ENCODE measurements at regions of chr22 and their contacts with region 1.

Region 1: DNA sequence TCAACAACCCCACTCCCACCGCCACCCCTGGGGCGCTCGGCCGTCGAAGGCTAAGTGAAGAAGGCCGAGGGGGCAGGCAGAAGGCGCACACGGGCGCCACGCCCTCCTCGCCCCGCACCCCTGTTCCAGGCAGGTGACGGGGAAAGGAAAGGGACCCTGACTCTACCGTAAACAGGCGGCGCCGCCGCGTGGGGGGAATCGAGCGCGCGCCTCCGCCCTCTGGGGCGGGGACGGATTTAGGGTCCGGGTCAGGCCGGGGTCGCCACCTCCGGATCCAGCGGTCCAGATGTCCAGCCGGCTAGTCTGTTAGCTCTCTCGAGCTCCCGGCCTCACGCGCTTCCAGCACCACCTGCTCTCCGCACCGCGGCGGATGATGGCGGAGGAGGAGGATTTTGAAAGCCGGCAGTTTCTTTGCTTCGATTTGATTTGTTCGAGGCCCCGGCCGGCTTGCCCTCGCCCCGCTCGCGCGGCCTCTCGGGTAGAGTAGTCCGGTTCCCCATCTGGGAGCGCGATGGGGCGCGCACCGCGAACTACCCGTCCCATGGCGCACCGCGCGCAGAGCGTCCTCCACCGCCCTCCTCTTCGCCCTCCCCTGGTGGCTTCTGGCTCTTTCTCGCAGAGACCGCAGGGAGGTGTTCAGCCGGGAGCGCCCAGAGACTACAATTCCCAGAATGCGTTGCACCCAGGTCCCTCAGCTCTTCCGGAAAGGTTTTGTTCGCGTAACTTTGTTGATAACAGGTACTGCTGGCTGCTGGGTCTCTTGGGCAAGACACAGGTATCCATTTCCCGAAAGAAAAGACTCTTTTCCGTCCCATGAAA is at the start of gene RANGAP1:
- DNase-seq: peak; percentile 98 to 99 (median 99)
- H3K4me3 ChIP-seq: peak within 1 kb of the TSS; percentile 82 to 94
- H3K4me3 Mint-ChIP-seq: peak within 1 kb of the TSS; percentile 92 to 98 (median 96)
- H3K27ac ChIP-seq: peak within 1 kb of the TSS; percentile 99
- H3K27ac Mint-ChIP-seq: peak within 1 kb of the TSS; percentile 96 to 99 (median 99)
- H3K4me1 ChIP-seq: peaks cover 23% of the 10 kb centered on the region
- H3K4me1 Mint-ChIP-seq: peaks cover 16 to 50% (median 36%) of the 10 kb centered on the region in 4 donors
- H3K27me3 ChIP-seq: no peaks in the 10 kb centered on the region
- H3K27me3 Mint-ChIP-seq: no peaks in the 10 kb centered on the region
- total RNA-seq, gene RANGAP1: 69.1 to 74.7 TPM

Region 2: DNA sequence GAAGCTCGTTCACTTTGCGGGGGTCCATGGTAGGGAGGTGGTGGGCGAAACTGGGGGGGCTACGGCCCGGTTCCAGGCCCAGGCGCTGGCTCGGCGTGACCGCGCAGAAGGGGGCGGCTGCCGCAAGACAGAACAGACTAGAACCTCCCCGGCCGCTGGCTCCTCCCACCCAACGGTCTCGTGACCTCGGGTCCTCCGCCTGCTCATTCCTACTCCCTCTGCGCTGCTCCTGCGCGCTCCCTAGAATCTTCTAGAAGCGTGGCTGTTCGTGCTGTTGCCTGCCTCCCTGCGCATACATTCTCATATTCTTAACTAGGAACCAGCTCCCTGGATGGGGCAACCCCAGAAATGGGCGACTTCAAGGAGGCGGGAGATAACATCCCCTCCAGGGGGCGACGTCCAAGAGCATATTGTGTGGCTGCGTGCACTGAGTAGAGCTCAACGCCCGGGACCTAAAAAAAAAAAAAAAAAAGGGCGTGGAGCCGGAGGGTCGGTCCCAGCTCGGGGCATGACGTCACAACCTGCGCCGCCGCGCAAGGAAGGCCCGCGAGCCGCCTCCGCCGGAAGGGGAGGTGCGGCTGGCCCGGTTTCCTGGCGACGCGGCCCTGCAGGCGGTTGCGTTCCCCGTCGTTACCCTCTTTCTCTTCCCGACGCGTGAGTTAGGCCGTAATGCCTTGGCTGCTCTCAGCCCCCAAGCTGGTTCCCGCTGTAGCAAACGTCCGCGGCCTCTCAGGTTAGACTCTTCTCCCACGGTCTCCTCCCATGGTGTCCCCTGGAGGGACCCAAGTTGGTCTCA is 429.3 kb before region 1 on chr22 and contains the starts of genes ST13 and XPNPEP3:
- CTCF ChIA-PET with region 1: no interaction called
- POLR2A ChIA-PET with region 1: interaction called, 16 read pairs
- intact Hi-C with region 1: loop called (anchors 1 kb)
- DNase-seq: peak; percentile 97 to 98 (median 98)
- H3K4me3 ChIP-seq: peak within 1 kb of the TSS; percentile 72 to 100
- H3K4me3 Mint-ChIP-seq: peak within 1 kb of the TSS; percentile 96 to 99 (median 98)
- H3K27ac ChIP-seq: peak within 1 kb of the TSS; percentile 99
- H3K27ac Mint-ChIP-seq: peak within 1 kb of the TSS; percentile 98 to 100 (median 100)
- H3K4me1 ChIP-seq: peaks cover 53% of the 10 kb centered on the region
- H3K4me1 Mint-ChIP-seq: peaks cover 23 to 66% (median 45%) of the 10 kb centered on the region in 4 donors
- H3K27me3 ChIP-seq: no peaks in the 10 kb centered on the region
- H3K27me3 Mint-ChIP-seq: peaks cover 0 to 2% of the 10 kb centered on the region in 2 donors
- total RNA-seq, gene ST13: 161 to 168 TPM
- total RNA-seq, gene XPNPEP3: 18.6 to 20.0 TPM

Region 3: GRCh38 chr22:41091132-41092022 is 194.7 kb before region 1 on chr22:
- CTCF ChIA-PET with region 1: no interaction called
- POLR2A ChIA-PET with region 1: interaction called, 11 read pairs
- intact Hi-C with region 1: loop called (anchors 1 kb)
- DNase-seq: peak; percentile 98 to 99 (median 99)
- H3K4me3 ChIP-seq: peak overlapping the region; percentile 79 to 93
- H3K4me3 Mint-ChIP-seq: peak overlapping the region; percentile 93 to 100 (median 98)
- H3K27ac ChIP-seq: peak overlapping the region; percentile 99
- H3K27ac Mint-ChIP-seq: peak overlapping the region; percentile 97 to 100 (median 99)
- H3K4me1 ChIP-seq: peaks cover 27% of the 10 kb centered on the region
- H3K4me1 Mint-ChIP-seq: peaks cover 20 to 44% (median 27%) of the 10 kb centered on the region in 4 donors
- H3K27me3 ChIP-seq: no peaks in the 10 kb centered on the region
- H3K27me3 Mint-ChIP-seq: no peaks in the 10 kb centered on the region

Region 4: GRCh38 chr22:41204992-41205900 is 80.8 kb before region 1 on chr22 and contains the start of gene L3MBTL2:
- CTCF ChIA-PET with region 1: no interaction called
- POLR2A ChIA-PET with region 1: no interaction called
- intact Hi-C with region 1: loop called (anchors 2 kb)
- DNase-seq: peak; percentile 97 to 99 (median 98)
- H3K4me3 ChIP-seq: peak within 1 kb of the TSS; percentile 73 to 95
- H3K4me3 Mint-ChIP-seq: peak within 1 kb of the TSS; percentile 93 to 99 (median 96)
- H3K27ac ChIP-seq: peak within 1 kb of the TSS; percentile 85
- H3K27ac Mint-ChIP-seq: peak within 1 kb of the TSS; percentile 84 to 97 (median 93)
- H3K4me1 ChIP-seq: peaks cover 18% of the 10 kb centered on the region
- H3K4me1 Mint-ChIP-seq: peaks cover 15 to 40% (median 23%) of the 10 kb centered on the region in 4 donors
- H3K27me3 ChIP-seq: no peaks in the 10 kb centered on the region
- H3K27me3 Mint-ChIP-seq: peaks cover 3 to 6% of the 10 kb centered on the region in 2 donors
- total RNA-seq, gene L3MBTL2: 42.7 to 48.2 TPM

Region 5: GRCh38 chr22:41264408-41264941 is 21.6 kb before region 1 on chr22:
- CTCF ChIA-PET with region 1: no interaction called
- POLR2A ChIA-PET with region 1: interaction called, 15 read pairs
- intact Hi-C with region 1: no loop called
- DNase-seq: no peak
- H3K4me3 ChIP-seq: no peak overlapping the region
- H3K4me3 Mint-ChIP-seq: no peak overlapping the region
- H3K27ac ChIP-seq: no peak overlapping the region
- H3K27ac Mint-ChIP-seq: peak overlapping the region in 2 of 7 donors; percentile 27 to 75
- H3K4me1 ChIP-seq: no peaks in the 10 kb centered on the region
- H3K4me1 Mint-ChIP-seq: peaks cover 0 to 3% (median under 1%) of the 10 kb centered on the region in 4 donors
- H3K27me3 ChIP-seq: no peaks in the 10 kb centered on the region
- H3K27me3 Mint-ChIP-seq: no peaks in the 10 kb centered on the region

Region 6: DNA sequence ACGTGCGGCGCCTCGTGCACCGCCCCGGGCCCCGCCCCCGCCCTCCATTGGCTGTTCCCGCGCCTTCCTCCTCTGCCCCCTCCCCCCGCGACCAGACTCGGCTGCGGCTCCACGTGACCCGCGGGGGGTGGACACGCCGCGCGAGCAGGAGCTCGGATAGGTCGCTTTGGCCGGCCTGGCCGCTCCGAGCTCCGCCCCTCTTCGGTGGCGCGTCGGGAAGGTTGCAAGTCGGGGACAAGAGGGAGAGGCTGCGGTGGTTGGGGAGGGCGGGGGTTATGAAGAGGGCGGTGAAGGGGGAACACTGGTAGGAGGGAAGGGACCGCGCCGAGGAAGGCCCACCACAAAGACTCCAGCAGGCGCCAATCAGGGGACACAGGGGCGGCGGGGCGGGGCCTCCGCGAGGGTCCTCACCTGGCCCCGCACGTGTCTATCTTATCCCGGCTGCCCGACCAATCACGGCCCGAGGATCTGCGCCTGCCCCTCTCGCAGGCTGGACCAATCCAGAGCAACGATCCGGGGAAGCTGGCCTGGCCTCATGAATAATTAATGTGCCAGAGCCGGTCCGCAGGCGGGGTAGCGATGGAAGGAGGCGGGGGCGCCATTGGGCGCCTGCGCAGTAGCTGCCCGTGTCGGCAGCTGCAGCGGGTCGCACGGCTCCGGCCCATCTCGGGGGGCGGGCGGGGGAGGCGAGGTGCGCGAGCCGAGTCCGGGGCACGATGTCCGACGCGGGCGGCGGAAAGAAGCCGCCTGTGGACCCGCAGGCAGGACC is 95.5 kb after region 1 on chr22 and contains the start of gene TEF:
- CTCF ChIA-PET with region 1: interaction called, 4 read pairs
- POLR2A ChIA-PET with region 1: interaction called, 45 read pairs
- intact Hi-C with region 1: loop called (anchors 1 kb)
- DNase-seq: peak; percentile 99
- H3K4me3 ChIP-seq: peak within 1 kb of the TSS; percentile 65 to 88
- H3K4me3 Mint-ChIP-seq: peak within 1 kb of the TSS; percentile 90 to 97 (median 94)
- H3K27ac ChIP-seq: peak within 1 kb of the TSS; percentile 87
- H3K27ac Mint-ChIP-seq: peak within 1 kb of the TSS; percentile 98 to 99 (median 98)
- H3K4me1 ChIP-seq: peaks cover 18% of the 10 kb centered on the region
- H3K4me1 Mint-ChIP-seq: peaks cover 12 to 36% (median 22%) of the 10 kb centered on the region in 4 donors
- H3K27me3 ChIP-seq: no peaks in the 10 kb centered on the region
- H3K27me3 Mint-ChIP-seq: no peaks in the 10 kb centered on the region
- total RNA-seq, gene TEF: 6.5 to 8.8 TPM

Region 7: GRCh38 chr22:41468381-41469217 is 182.6 kb after region 1 on chr22 and contains the starts of genes ACO2 and PHF5A:
- CTCF ChIA-PET with region 1: no interaction called
- POLR2A ChIA-PET with region 1: interaction called, 10 read pairs
- intact Hi-C with region 1: loop called (anchors 2 kb)
- DNase-seq: peak; percentile 98
- H3K4me3 ChIP-seq: peak within 1 kb of the TSS; percentile 67 to 90
- H3K4me3 Mint-ChIP-seq: peak within 1 kb of the TSS; percentile 86 to 95 (median 92)
- H3K27ac ChIP-seq: peak within 1 kb of the TSS; percentile 89
- H3K27ac Mint-ChIP-seq: peak within 1 kb of the TSS; percentile 96 to 100 (median 99)
- H3K4me1 ChIP-seq: peaks cover 28% of the 10 kb centered on the region
- H3K4me1 Mint-ChIP-seq: peaks cover 29 to 56% (median 44%) of the 10 kb centered on the region in 4 donors
- H3K27me3 ChIP-seq: no peaks in the 10 kb centered on the region
- H3K27me3 Mint-ChIP-seq: no peaks in the 10 kb centered on the region
- total RNA-seq, gene ACO2: 64.8 to 65.0 TPM
- total RNA-seq, gene PHF5A: 37.7 to 39.2 TPM

Measured in CD4-positive, alpha-beta memory T cell (primary cell).